HEK293T (cell line): ENCODE measurements at regions of chr5 and their contacts with region 1.

Region 1: DNA sequence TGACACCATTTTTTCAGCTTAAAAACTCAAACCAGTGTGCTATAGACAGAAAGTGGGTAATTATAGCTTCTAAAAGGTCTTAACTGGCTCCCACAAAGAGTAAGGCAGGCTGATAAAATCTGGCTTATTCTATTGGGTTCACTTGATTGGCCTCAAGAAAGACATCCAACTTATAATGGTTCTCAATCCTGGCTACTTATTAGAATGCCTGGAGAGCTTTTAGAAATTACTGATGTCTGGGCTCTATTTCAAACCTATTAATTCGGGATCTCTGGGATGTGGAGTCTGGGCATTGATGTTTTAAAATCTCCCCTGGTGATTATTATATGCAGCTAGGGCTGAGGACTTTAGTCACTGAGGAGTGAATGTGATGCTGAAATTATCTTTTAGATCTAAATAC is 188.0 kb downstream of the TARS1 start:
- DNase-seq: no peak

Region 2: DNA sequence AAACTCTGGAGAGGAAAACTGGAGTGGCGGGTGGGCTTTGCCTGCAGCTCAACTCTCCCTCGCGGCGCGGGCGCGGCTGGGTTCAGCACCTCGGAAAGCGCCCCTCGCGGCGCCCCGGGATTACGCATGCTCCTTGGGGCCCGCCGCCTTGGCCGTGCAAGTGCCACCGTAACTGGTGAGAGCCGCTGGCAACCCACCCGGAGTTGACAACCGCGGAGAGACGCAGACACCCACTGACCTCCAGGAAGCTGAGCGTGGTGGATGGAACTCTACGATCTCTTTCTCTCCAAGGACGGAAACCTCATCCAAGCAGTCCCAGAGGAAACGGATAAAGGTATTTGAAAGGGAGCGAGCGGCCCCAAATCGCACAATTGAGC is 307.2 kb after region 1 on chr5:
- CTCF ChIA-PET with region 1: interaction called, 10 read pairs
- POLR2A ChIA-PET with region 1: no interaction called
- DNase-seq: peak; percentile 32